HAP-1 (cell line): ENCODE measurements at regions of chr11 and their contacts with region 1.

Region 1: DNA sequence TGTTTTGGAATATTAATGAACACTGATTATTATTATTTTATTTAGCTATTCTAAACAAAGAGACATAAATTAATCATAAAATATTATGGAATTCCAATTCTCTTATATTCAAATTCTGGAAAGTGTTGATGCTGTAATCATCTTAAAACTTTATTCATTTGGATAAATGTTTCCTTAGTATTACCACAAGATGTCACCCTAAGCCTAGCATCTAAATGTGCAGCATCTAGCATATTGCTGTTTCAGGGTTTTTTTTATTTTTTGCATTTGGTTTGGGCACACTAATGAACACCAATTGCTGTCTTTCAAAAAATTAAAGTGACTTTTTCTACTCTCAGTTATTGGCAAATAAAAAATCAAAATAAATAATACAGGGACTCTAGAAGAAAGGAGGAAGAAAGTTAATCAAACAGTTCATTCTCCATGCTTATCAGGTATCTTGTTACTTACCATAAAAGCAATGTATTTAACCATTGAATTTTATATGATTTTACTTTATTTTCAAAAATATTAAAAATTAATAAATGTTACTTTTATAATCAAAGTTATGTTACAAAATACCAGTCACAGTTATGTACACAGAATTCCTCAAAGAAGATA is 31.8 kb downstream of the DLG2 start:
- DNase-seq: peak in 1 of 2 experiments; percentile 74
- H3K4me3 ChIP-seq: no peak overlapping the region
- H3K4me1 ChIP-seq: peaks cover 16% of the 10 kb centered on the region
- H3K27me3 ChIP-seq: no peaks in the 10 kb centered on the region

Region 2: DNA sequence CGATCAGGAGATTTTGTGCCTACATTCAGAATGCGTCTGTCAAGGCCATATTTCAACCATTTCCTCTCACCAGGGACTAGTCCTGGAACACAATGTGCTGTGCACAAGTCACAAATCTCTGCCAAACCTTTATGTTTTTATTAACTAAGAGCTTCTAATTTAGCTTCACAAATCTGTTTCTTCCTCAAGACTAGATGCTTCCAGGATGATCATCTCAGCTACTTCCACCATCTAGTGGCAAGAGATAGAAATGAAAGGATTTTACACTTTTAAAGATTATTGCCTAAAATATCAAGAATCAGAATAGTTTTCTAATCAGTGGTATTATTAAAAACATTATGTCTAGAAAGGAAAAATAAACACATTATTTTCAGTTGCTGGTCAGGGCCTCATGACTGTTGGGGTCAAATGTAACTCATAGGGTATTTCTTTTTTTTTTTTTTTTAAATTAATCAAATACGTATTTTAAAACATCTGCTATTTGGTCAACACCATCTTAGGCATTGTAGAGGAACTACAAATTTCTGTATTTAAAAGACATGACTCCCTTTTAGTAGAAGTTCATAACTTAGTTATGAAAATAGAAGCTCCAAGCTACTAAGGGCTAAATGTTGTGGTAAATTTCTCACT is 1070.8 kb before region 1 on chr11:
- in situ Hi-C with region 1: loop called (anchors 25 kb)
- DNase-seq: peak in 1 of 2 experiments; percentile 50
- H3K4me3 ChIP-seq: no peak overlapping the region
- H3K4me1 ChIP-seq: peaks cover 2% of the 10 kb centered on the region; the same call in 1 of the 2 replicates
- H3K27me3 ChIP-seq: no peaks in the 10 kb centered on the region

Region 3: DNA sequence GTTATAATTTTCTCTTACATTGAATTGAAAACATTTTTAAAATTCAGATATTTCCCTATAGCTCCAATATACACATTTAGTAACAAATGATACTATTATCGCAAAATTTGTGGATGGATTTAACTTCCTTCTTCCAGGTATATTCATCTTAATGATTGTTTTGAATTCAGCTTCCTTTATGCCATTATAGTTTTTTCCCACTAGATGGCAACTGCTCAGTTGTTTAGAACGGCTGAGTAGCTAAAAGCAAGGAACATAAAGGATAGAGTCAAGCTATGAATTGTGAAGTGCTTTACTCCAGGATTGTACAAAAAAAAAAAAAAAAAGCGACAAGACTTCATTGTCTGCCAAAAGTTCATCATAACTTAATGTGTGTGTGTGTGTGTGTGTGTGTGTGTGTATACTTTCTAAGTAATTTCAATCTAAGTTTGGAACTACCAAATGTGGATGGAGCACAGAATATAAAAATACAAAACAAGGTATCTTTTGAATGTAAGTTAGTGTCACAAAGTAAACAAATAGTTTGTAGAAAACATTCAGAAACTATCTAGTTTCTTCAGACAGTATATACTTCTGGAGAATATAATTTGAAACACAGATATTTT is 814.6 kb before region 1 on chr11:
- in situ Hi-C with region 1: loop called (anchors 25 kb)
- DNase-seq: peak in 1 of 2 experiments; percentile 73
- H3K4me3 ChIP-seq: no peak overlapping the region
- H3K4me1 ChIP-seq: peaks cover 9% of the 10 kb centered on the region
- H3K27me3 ChIP-seq: no peaks in the 10 kb centered on the region